CD8-positive, alpha-beta memory T cell (primary cell): ENCODE measurements at regions of chr2 and their contacts with region 1.

Region 1: GRCh38 chr2:156589381-156590079 is 153.4 kb downstream of the GPD2 start:
- DNase-seq: peak in 2 of 5 donors; percentile 24 to 29
- H3K4me3 ChIP-seq: no peak overlapping the region
- H3K4me3 Mint-ChIP-seq: no peak overlapping the region
- H3K27ac ChIP-seq: no peak overlapping the region
- H3K27ac Mint-ChIP-seq: peak overlapping the region in 2 of 8 donors; percentile 19 to 22
- H3K4me1 ChIP-seq: no peaks in the 10 kb centered on the region
- H3K4me1 Mint-ChIP-seq: peaks cover 1 to 6% (median 4%) of the 10 kb centered on the region in 3 donors
- H3K27me3 ChIP-seq: no peaks in the 10 kb centered on the region
- H3K27me3 Mint-ChIP-seq: no peaks in the 10 kb centered on the region

Region 2: DNA sequence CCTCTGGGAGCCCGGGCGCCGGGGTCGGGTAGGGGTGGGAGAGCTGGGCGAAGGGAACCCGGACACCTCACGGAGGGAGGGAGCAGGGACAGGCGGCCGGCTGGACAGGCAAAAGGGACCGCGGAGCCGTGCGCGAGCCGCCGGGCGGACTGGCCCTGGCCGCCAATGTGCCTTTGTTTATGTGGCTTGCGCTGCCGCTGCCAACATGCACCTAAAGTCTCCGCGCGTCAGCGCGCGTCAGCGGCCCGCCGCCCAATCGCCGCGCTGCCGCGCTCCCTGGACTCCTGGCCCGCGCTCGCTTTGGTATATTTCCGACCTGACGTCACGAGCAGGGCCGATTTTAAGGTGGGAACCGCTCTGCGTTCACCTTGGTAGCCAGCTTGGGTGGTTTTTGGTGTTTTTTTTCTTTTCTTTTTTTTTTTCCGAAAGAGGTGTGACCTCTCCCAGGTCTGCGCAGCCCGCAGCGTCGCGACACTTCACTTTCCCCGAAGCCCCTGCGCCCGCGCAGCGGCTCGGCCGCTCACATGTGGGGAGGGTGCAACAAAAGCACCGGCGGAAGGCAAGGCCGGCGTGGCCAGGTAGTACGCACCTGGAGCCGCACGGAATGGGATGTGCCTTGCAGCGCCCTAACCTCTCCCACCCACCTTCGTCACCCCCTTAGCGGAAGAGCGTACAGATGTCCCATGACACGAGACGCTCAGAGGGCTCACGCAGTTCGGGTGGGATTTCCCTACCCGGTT is 256.8 kb before region 1 on chr2 and contains the start of gene NR4A2:
- CTCF ChIA-PET with region 1: interaction called, 17 read pairs
- POLR2A ChIA-PET with region 1: interaction called, 9 read pairs
- DNase-seq: peak; percentile 86 to 96 (median 93)
- H3K4me3 ChIP-seq: peak within 1 kb of the TSS; percentile 99
- H3K4me3 Mint-ChIP-seq: peak within 1 kb of the TSS; percentile 94 to 99 (median 97)
- H3K27ac ChIP-seq: peak within 1 kb of the TSS; percentile 94
- H3K27ac Mint-ChIP-seq: peak within 1 kb of the TSS; percentile 98 to 100 (median 99)
- H3K4me1 ChIP-seq: peaks cover 22% of the 10 kb centered on the region
- H3K4me1 Mint-ChIP-seq: peaks cover 25 to 65% (median 36%) of the 10 kb centered on the region in 3 donors
- H3K27me3 ChIP-seq: no peaks in the 10 kb centered on the region
- H3K27me3 Mint-ChIP-seq: peaks cover 4 to 46% of the 10 kb centered on the region in 2 donors
- total RNA-seq, gene NR4A2: 19.7 to 21.9 TPM

Region 3: GRCh38 chr2:156526950-156527636 is 62.4 kb before region 1 on chr2:
- CTCF ChIA-PET with region 1: no interaction called
- POLR2A ChIA-PET with region 1: no interaction called
- DNase-seq: no peak
- H3K4me3 ChIP-seq: no peak overlapping the region
- H3K4me3 Mint-ChIP-seq: no peak overlapping the region
- H3K27ac ChIP-seq: no peak overlapping the region
- H3K27ac Mint-ChIP-seq: peak overlapping the region in 1 of 8 donors; percentile 50
- H3K4me1 ChIP-seq: no peaks in the 10 kb centered on the region
- H3K4me1 Mint-ChIP-seq: peaks cover 1 to 11% (median 6%) of the 10 kb centered on the region in 3 donors
- H3K27me3 ChIP-seq: no peaks in the 10 kb centered on the region
- H3K27me3 Mint-ChIP-seq: no peaks in the 10 kb centered on the region

Region 4: DNA sequence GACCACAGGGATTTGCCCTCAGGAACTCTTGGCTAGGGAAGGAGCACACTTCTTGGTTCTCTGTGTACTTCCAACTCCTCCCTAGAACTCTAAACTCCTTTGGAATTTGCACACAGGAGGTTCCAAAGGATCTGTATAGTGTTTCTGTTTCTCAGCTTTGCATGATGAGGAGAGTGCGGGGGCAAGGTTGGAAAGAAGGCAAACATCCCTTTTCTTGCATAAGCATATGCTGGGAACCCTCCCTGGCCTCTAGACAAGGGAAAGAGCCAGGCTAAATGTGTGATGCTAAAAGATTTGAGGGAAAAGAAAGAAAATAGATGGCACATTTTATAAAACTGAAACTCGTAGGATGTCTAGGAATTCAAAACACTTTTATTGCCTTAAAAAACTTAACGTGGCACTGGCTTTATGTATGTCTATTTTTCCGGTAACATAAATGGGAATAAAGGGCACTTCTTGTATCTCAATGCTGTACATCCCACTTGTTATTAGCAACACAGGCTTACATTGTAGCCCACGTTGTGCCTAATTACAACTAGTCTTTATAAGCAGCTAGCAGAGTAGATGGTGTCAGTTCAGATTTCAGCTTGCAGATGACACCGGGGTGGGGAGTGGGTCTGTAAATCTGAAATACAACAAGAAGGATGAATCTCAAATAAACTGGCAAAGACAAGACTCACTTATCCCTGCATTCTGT is 12.5 kb after region 1 on chr2:
- CTCF ChIA-PET with region 1: no interaction called
- POLR2A ChIA-PET with region 1: no interaction called
- DNase-seq: no peak
- H3K4me3 ChIP-seq: no peak overlapping the region
- H3K4me3 Mint-ChIP-seq: no peak overlapping the region
- H3K27ac ChIP-seq: no peak overlapping the region
- H3K27ac Mint-ChIP-seq: no peak overlapping the region
- H3K4me1 ChIP-seq: no peaks in the 10 kb centered on the region
- H3K4me1 Mint-ChIP-seq: no peaks in the 10 kb centered on the region
- H3K27me3 ChIP-seq: no peaks in the 10 kb centered on the region
- H3K27me3 Mint-ChIP-seq: peaks cover 16 to 23% of the 10 kb centered on the region in 2 donors